CD4-positive, alpha-beta memory T cell (primary cell): ENCODE measurements at regions of chr19 and their contacts with region 1.

Region 1: DNA sequence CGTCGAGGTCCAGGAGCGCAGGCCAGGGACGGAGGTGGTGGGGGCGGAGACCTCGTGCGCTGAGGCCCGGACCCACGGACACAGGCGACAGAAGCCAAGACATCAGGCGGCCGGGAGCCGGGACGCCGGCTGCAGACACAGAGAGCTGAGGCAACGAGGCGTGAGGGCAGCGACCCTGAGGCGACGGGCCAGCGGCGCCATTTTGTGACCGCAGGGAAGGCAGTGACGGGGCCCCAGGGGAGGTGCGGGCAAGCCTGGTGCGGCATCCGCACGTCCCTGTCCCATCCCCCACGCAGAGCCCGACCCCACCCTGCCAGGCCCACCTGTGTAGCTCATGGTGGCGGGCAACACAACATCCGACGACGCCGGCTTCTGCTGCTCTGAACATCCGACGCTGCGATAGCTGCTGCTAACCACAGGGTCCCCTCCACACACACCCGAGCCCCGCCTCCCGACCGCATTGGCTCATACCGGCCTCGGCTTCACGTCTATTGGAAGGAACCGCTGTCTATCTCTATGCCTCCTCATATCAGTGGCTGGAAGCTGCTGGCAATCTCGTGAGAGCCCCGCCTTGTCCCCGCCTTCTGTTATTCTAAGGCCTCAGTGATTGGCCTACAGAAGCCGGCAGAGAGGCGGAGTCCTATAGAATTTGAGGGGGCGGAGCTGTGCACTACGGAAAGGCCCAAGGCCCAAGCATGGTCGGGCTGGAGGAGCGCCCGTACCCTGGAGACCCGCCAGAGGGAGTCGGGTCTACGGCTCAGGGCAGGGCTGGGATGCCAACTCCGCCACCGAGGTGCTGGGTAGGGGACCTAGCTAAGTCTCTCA is at the start of gene AKAP8L:
- DNase-seq: peak; percentile 99 to 100 (median 100)
- H3K4me3 ChIP-seq: peak within 1 kb of the TSS; percentile 91 to 95
- H3K4me3 Mint-ChIP-seq: peak within 1 kb of the TSS; percentile 96 to 100 (median 100)
- H3K27ac ChIP-seq: peak within 1 kb of the TSS; percentile 77
- H3K27ac Mint-ChIP-seq: peak within 1 kb of the TSS; percentile 87 to 100 (median 99)
- H3K4me1 ChIP-seq: peaks cover 45% of the 10 kb centered on the region
- H3K4me1 Mint-ChIP-seq: peaks cover 31 to 58% (median 38%) of the 10 kb centered on the region in 4 donors
- H3K27me3 ChIP-seq: no peaks in the 10 kb centered on the region
- H3K27me3 Mint-ChIP-seq: no peaks in the 10 kb centered on the region
- total RNA-seq, gene AKAP8L: 177 to 182 TPM

Region 2: DNA sequence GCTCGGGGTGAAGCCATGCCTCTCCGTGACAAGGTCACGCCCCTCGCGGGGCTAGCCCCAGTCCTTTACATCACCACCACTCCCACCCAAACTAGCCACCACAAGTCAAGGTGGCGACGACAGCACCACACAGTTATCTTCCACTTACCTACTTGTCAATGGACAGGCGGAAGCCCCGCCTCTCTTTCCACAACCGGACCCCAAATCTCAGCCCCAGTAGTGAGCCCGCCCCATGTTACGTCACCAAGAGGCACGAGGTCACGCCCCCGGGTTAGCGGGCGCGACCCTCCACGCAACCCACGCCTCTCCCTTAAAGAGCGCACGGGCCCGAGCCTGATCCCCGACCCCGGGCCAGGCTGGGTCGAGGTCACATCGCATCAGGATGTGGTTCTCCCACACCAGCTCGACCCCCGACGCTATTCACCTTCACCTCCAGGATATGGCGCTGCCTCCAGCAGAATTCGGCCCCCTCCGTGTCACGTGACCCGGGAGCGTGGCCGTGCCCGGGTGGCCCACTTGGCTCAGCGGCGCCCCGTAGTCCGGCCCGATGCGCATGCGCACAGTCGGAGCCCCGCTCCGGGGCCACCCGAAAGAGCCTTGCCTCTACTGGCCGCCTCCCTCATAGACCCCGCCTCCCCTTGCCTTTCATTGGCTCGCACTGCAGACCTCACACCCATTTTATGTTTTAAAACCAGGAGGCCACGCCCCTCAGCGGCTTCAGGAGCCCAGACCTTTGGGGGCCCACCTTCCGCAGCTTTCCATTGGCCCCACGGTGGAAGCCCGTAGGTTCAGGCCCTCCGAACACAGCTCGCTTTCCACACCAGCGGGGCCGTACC is 293.4 kb before region 1 on chr19:
- CTCF ChIA-PET with region 1: no interaction called
- POLR2A ChIA-PET with region 1: interaction called, 6 read pairs
- intact Hi-C with region 1: loop called (anchors 1 kb)
- DNase-seq: peak; percentile 96
- H3K4me3 ChIP-seq: peak overlapping the region; percentile 86 to 89
- H3K4me3 Mint-ChIP-seq: peak overlapping the region; percentile 91 to 99 (median 98)
- H3K27ac ChIP-seq: peak overlapping the region; percentile 90
- H3K27ac Mint-ChIP-seq: peak overlapping the region; percentile 95 to 100 (median 98)
- H3K4me1 ChIP-seq: peaks cover 31% of the 10 kb centered on the region
- H3K4me1 Mint-ChIP-seq: peaks cover 22 to 48% (median 36%) of the 10 kb centered on the region in 4 donors
- H3K27me3 ChIP-seq: no peaks in the 10 kb centered on the region
- H3K27me3 Mint-ChIP-seq: peaks cover 0 to 6% of the 10 kb centered on the region in 2 donors

Region 3: GRCh38 chr19:15332311-15332996 is 86.3 kb before region 1 on chr19 and contains the start of gene BRD4:
- CTCF ChIA-PET with region 1: no interaction called
- POLR2A ChIA-PET with region 1: interaction called, 16 read pairs
- intact Hi-C with region 1: loop called (anchors 2 kb)
- DNase-seq: peak; percentile 69 to 82 (median 78)
- H3K4me3 ChIP-seq: peak within 1 kb of the TSS; percentile 84 to 87
- H3K4me3 Mint-ChIP-seq: peak within 1 kb of the TSS; percentile 94 to 97 (median 95)
- H3K27ac ChIP-seq: peak within 1 kb of the TSS; percentile 90
- H3K27ac Mint-ChIP-seq: peak within 1 kb of the TSS; percentile 91 to 99 (median 96)
- H3K4me1 ChIP-seq: peaks cover 46% of the 10 kb centered on the region
- H3K4me1 Mint-ChIP-seq: peaks cover 25 to 55% (median 39%) of the 10 kb centered on the region in 4 donors
- H3K27me3 ChIP-seq: no peaks in the 10 kb centered on the region
- H3K27me3 Mint-ChIP-seq: no peaks in the 10 kb centered on the region
- total RNA-seq, gene BRD4: 149 to 152 TPM

Region 4: GRCh38 chr19:15449620-15450527 is 31.1 kb after region 1 on chr19 and contains the start of gene WIZ:
- CTCF ChIA-PET with region 1: interaction called, 17 read pairs
- POLR2A ChIA-PET with region 1: interaction called, 28 read pairs
- intact Hi-C with region 1: loop called (anchors 1 kb)
- DNase-seq: peak; percentile 83 to 90 (median 86)
- H3K4me3 ChIP-seq: peak within 1 kb of the TSS in 1 of 2 donors; percentile 63
- H3K4me3 Mint-ChIP-seq: peak within 1 kb of the TSS; percentile 79 to 91 (median 85)
- H3K27ac ChIP-seq: peak within 1 kb of the TSS; percentile 57
- H3K27ac Mint-ChIP-seq: peak within 1 kb of the TSS; percentile 89 to 98 (median 97)
- H3K4me1 ChIP-seq: peaks cover 21% of the 10 kb centered on the region
- H3K4me1 Mint-ChIP-seq: peaks cover 8 to 31% (median 24%) of the 10 kb centered on the region in 4 donors
- H3K27me3 ChIP-seq: no peaks in the 10 kb centered on the region
- H3K27me3 Mint-ChIP-seq: no peaks in the 10 kb centered on the region
- total RNA-seq, gene WIZ: 28.7 to 30.0 TPM

Region 5: GRCh38 chr19:15508035-15508710 is 89.4 kb after region 1 on chr19 and contains the start of gene CYP4F22:
- CTCF ChIA-PET with region 1: interaction called, 3 read pairs
- POLR2A ChIA-PET with region 1: interaction called, 20 read pairs
- intact Hi-C with region 1: no loop called
- DNase-seq: peak in 2 of 5 donors; percentile 15 to 25
- H3K4me3 ChIP-seq: peak within 1 kb of the TSS in 1 of 2 donors; percentile 41
- H3K4me3 Mint-ChIP-seq: peak within 1 kb of the TSS; percentile 84 to 88 (median 86)
- H3K27ac ChIP-seq: no peak within 1 kb of the TSS
- H3K27ac Mint-ChIP-seq: peak within 1 kb of the TSS in 6 of 7 donors; percentile 5 to 78 (median 26)
- H3K4me1 ChIP-seq: peaks cover 16% of the 10 kb centered on the region
- H3K4me1 Mint-ChIP-seq: peaks cover 13 to 26% (median 18%) of the 10 kb centered on the region in 4 donors
- H3K27me3 ChIP-seq: peaks cover 5% of the 10 kb centered on the region
- H3K27me3 Mint-ChIP-seq: peaks cover 1 to 3% of the 10 kb centered on the region in 2 donors
- total RNA-seq, gene CYP4F22: 0.44 to 0.61 TPM

Region 6: DNA sequence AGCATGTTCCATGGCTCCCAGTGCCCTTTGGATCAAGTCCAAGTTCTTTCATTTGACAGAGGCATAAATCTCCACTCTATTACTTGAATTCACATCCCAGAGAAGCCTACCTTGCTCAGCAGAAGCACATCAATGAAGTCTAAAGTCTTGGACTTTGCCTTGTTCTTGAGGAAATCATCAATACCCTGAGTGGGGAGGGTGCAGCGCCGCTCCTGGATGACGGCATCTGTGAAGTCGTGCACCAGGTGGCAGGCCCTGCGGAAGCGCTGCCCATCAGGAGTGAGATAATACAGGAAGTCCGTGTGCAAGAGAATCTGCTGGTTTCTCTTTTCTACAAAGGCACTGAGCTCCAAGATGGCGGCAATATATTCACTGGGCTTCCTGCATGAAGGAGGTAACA is 504.9 kb after region 1 on chr19:
- CTCF ChIA-PET with region 1: no interaction called
- POLR2A ChIA-PET with region 1: no interaction called
- intact Hi-C with region 1: no loop called
- DNase-seq: no peak
- H3K4me3 ChIP-seq: no peak overlapping the region
- H3K4me3 Mint-ChIP-seq: no peak overlapping the region
- H3K27ac ChIP-seq: no peak overlapping the region
- H3K27ac Mint-ChIP-seq: no peak overlapping the region
- H3K4me1 ChIP-seq: no peaks in the 10 kb centered on the region
- H3K4me1 Mint-ChIP-seq: no peaks in the 10 kb centered on the region
- H3K27me3 ChIP-seq: no peaks in the 10 kb centered on the region
- H3K27me3 Mint-ChIP-seq: peaks cover 28 to 52% of the 10 kb centered on the region in 2 donors